ENCODE measurements at regions of chr3 and their contacts with region 1.

Region 1: GRCh38 chr3:148718982-148719862 is 21.5 kb downstream of the AGTR1 start:
- DNase-seq: no peak
- H3K4me3 ChIP-seq: no peak overlapping the region
- H3K27ac ChIP-seq: no peak overlapping the region
- H3K4me1 ChIP-seq: peaks cover 0 to 27% (median 12%) of the 10 kb centered on the region in 4 donors
- H3K27me3 ChIP-seq: no peaks in the 10 kb centered on the region
- CTCF ChIP-seq: peak; percentile 32 to 53 (median 45)
- EP300 ChIP-seq: no peak
- POLR2A ChIP-seq: no peak

Region 2: DNA sequence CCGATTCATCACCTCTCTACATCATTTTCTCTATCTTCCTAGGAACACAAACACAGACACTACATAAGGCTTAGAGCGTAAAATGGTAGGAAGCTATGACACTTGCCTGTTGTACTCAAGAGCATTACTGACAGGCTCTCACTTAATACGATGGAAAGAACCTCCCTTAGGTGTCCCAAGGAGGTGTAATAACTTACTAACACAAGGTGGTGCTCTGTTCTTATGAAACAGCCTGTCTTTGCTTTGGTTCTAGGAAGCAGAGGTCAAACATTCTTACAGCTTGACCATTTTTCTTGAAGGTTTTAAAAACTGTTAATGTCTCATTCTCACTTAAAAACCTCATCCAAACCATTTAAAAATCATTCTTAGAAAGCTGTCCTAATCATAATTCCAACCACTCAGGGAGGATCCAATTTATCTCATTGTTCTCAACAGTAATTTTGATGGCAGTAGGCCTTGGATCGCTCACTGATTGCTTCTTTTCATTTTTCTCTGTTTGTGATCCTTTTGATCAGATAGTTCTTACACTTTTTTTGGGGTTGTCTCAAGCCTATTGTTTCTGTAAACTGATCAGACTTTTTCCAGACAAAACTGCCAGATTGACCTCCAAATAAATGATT is 339.3 kb before region 1 on chr3:
- intact Hi-C with region 1: loop called (anchors 5 kb)
- DNase-seq: no peak
- H3K4me3 ChIP-seq: no peak overlapping the region
- H3K27ac ChIP-seq: no peak overlapping the region
- H3K4me1 ChIP-seq: no peaks in the 10 kb centered on the region
- H3K27me3 ChIP-seq: no peaks in the 10 kb centered on the region
- CTCF ChIP-seq: peak; percentile 50 to 63 (median 62)
- EP300 ChIP-seq: no peak
- POLR2A ChIP-seq: no peak